ENCODE measurements at regions of chr3 and their contacts with region 1.

Region 1: GRCh38 chr3:102841866-102842265 is 407.1 kb downstream of the ZPLD1 start:
- DNase-seq: no peak
- ATAC-seq: no peak
- H3K4me3 ChIP-seq: no peak overlapping the region
- H3K27ac ChIP-seq: no peak overlapping the region
- H3K4me1 ChIP-seq: no peaks in the 10 kb centered on the region
- H3K27me3 ChIP-seq: no peaks in the 10 kb centered on the region
- CTCF ChIP-seq: no peak

Region 2: GRCh38 chr3:102926618-102927017 is 84.8 kb after region 1 on chr3:
- CTCF ChIA-PET with region 1: no interaction called
- POLR2A ChIA-PET with region 1: interaction called, 11 read pairs
- in situ Hi-C with region 1: no loop called
- intact Hi-C with region 1: no loop called
- DNase-seq: no peak
- ATAC-seq: no peak
- H3K4me3 ChIP-seq: no peak overlapping the region
- H3K27ac ChIP-seq: no peak overlapping the region
- H3K4me1 ChIP-seq: no peaks in the 10 kb centered on the region
- H3K27me3 ChIP-seq: no peaks in the 10 kb centered on the region
- CTCF ChIP-seq: no peak